ENCODE measurements at regions of chr12 and their contacts with region 1.

Region 1: DNA sequence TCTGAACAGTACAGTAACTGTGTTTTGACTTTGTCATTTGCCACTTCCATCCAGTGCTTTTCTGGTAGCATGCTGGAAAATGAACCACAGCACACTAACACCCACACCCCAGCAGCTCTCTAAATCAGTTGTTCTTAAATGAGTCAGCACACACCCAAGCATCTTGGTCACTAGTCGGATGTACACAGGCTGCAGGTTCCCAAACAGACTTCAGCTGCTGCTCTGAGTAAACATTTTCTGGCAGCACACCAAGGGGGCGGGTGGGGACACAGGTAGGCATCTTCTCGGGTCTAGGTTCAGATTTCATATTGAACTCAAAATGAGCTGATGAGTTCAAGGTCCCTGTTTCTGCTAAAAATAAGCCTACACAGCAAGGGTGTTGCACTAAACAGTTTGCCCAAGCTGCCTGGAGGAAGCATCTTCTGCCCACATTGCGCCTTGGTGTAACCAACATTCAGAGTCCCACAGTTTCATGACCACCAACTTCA is 39.8 kb downstream of the IFNG start:
- DNase-seq: peak in 1 of 9 donors; percentile 72
- ATAC-seq: peak; percentile 72
- H3K4me3 ChIP-seq: no peak overlapping the region
- H3K4me3 Mint-ChIP-seq: peak overlapping the region in 1 of 10 donors; percentile 63
- H3K27ac ChIP-seq: no peak overlapping the region
- H3K27ac Mint-ChIP-seq: peak overlapping the region in 3 of 9 donors; percentile 3 to 33 (median 9)
- H3K4me1 ChIP-seq: peaks cover 0 to 63% of the 10 kb centered on the region in 2 donors
- H3K4me1 Mint-ChIP-seq: peaks cover 8 to 31% (median 19%) of the 10 kb centered on the region in 7 donors
- H3K27me3 ChIP-seq: no peaks in the 10 kb centered on the region
- H3K27me3 Mint-ChIP-seq: no peaks in the 10 kb centered on the region

Region 2: GRCh38 chr12:68080577-68080976 is 39.2 kb before region 1 on chr12:
- CTCF ChIA-PET with region 1: no interaction called
- POLR2A ChIA-PET with region 1: interaction called, 3 read pairs
- intact Hi-C with region 1: loop called in 1 of 2 experiments (anchors 5 kb)
- DNase-seq: peak in 4 of 9 donors; percentile 0 to 19 (median 10)
- ATAC-seq: peak; percentile 54
- H3K4me3 ChIP-seq: no peak overlapping the region
- H3K4me3 Mint-ChIP-seq: peak overlapping the region in 3 of 10 donors; percentile 8 to 57 (median 38)
- H3K27ac ChIP-seq: no peak overlapping the region
- H3K27ac Mint-ChIP-seq: peak overlapping the region in 2 of 9 donors; percentile 70 to 86
- H3K4me1 ChIP-seq: peaks cover 0 to 12% of the 10 kb centered on the region in 2 donors
- H3K4me1 Mint-ChIP-seq: peaks cover 0 to 30% (median 8%) of the 10 kb centered on the region in 7 donors
- H3K27me3 ChIP-seq: no peaks in the 10 kb centered on the region
- H3K27me3 Mint-ChIP-seq: no peaks in the 10 kb centered on the region

Region 3: DNA sequence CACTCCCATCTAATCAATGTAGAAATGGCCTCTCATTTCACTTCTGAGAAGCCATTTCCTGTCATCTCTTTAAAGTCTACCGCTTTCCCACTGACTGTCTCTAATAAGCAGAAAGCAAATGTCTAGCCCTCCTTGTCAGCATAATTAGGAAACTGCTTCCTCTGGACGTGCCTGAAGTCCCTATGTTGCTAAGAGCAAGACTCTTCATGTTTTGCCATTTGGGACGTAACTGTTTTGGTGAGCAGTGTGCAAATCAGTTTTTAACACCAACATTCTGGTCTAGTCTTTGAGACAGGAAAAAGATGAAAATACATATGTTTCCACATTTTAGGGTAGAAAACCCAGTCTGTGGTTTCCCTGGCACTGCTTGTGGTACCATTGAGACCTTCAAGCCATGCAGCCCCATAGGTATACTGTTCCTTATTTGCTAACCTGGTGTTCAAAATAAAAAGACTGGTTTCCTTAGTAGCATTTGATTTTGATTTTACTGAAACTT is 17.6 kb after region 1 on chr12:
- CTCF ChIA-PET with region 1: interaction called, 3 read pairs
- POLR2A ChIA-PET with region 1: no interaction called
- intact Hi-C with region 1: loop called in 1 of 2 experiments (anchors 1 kb)
- DNase-seq: peak in 5 of 9 donors; percentile 6 to 22 (median 10)
- ATAC-seq: peak; percentile 26
- H3K4me3 ChIP-seq: no peak overlapping the region
- H3K4me3 Mint-ChIP-seq: peak overlapping the region; percentile 4 to 71 (median 51)
- H3K27ac ChIP-seq: no peak overlapping the region
- H3K27ac Mint-ChIP-seq: peak overlapping the region in 7 of 9 donors; percentile 33 to 90 (median 65)
- H3K4me1 ChIP-seq: peaks cover 16 to 17% of the 10 kb centered on the region in 2 donors
- H3K4me1 Mint-ChIP-seq: peaks cover 8 to 56% (median 43%) of the 10 kb centered on the region in 7 donors
- H3K27me3 ChIP-seq: no peaks in the 10 kb centered on the region
- H3K27me3 Mint-ChIP-seq: no peaks in the 10 kb centered on the region

Region 4: GRCh38 chr12:68428724-68429501 is 309.1 kb after region 1 on chr12:
- CTCF ChIA-PET with region 1: no interaction called
- POLR2A ChIA-PET with region 1: no interaction called
- intact Hi-C with region 1: no loop called
- DNase-seq: no peak
- ATAC-seq: no peak
- H3K4me3 ChIP-seq: no peak overlapping the region
- H3K4me3 Mint-ChIP-seq: no peak overlapping the region
- H3K27ac ChIP-seq: no peak overlapping the region
- H3K27ac Mint-ChIP-seq: no peak overlapping the region
- H3K4me1 ChIP-seq: no peaks in the 10 kb centered on the region
- H3K4me1 Mint-ChIP-seq: peaks cover 0 to 9% (median 0%) of the 10 kb centered on the region in 7 donors
- H3K27me3 ChIP-seq: no peaks in the 10 kb centered on the region
- H3K27me3 Mint-ChIP-seq: no peaks in the 10 kb centered on the region